ENCODE measurements at regions of chr1 and their contacts with region 1.

Region 1: DNA sequence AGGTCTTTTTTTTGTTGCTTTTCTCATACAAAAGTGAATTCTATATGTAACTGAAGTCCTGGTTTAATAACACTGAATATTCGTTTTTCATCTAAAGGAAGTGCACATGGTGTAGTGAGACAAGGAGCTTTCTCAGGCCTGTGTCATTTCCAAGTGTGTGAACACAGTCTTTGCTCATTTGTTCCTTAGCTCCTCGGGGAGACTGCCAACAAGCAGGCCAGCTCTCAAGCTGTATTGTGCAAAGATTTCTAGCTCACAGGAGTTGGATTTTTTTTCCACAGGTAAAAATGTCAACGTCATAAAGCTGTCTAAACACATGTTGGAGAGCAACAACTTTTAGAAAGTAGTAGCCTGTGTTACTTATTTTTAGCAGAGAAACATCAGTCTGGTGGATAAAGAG is 87.8 kb upstream of the S1PR1 start:
- DNase-seq: peak in 1 of 2 experiments; percentile 26
- H3K4me3 ChIP-seq: no peak overlapping the region
- H3K27ac ChIP-seq: no peak overlapping the region
- H3K4me1 ChIP-seq: peaks cover 14% of the 10 kb centered on the region
- H3K27me3 ChIP-seq: no peaks in the 10 kb centered on the region
- CTCF ChIP-seq: no peak

Region 2: DNA sequence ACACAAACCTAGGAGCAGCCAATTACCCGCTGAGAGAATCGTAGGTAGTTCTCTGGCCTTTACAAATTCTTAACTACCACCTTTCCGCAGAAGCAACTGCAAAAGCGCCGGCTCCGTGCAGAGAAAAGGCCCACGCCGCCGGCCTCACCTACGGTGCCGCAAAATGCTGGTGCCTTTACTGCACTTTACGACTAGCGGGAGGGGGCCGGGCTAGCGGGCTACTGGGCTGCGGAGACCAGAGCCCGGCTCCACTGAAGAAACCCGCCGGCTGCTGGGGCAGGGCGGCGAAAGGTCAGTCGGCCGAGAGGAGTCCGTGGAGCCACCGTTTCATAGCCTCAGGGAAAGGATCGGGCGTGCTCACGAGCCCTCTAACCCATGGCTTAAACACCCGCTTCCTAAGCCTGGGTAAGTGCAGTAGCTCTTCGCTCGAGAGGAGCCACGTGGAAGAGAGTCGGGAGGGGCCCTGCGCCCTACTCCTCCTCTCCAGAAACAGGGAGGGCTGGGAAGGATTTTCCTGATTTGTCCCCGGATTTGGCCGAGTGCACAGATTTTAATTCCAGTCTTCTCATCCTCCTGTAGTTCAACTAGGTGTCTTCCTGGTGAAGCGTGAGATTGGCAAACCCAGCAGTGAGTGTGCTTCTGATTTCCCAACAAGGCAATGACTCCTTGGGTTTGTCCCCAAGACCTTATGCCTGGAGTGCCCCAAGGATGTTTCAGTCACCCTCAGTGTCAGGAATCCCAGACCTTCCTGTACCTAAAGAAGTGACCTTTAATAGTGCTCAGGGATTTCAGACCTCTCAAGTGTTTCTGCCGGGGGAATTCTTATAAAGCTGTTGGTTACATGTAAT is 123.1 kb before region 1 on chr1 and contains the start of gene DPH5:
- CTCF ChIA-PET with region 1: no interaction called
- POLR2A ChIA-PET with region 1: no interaction called
- intact Hi-C with region 1: loop called (anchors 10 kb)
- DNase-seq: peak; percentile 84 to 87
- H3K4me3 ChIP-seq: peak within 1 kb of the TSS; percentile 75
- H3K27ac ChIP-seq: peak within 1 kb of the TSS; percentile 77
- H3K4me1 ChIP-seq: peaks cover 18% of the 10 kb centered on the region
- H3K27me3 ChIP-seq: no peaks in the 10 kb centered on the region
- CTCF ChIP-seq: no peak
- total RNA-seq, gene DPH5: 38.8 and 39.4 TPM in 2 replicates